ENCODE measurements at regions of chr15 and their contacts with region 1.

Region 1: GRCh38 chr15:55434989-55435825 is 26.9 kb downstream of the PIERCE2 start:
- DNase-seq: peak in 1 of 2 donors; percentile 66
- ATAC-seq: peak in 2 of 3 donors; percentile 67
- H3K4me3 ChIP-seq: no peak overlapping the region
- H3K4me3 Mint-ChIP-seq: no peak overlapping the region
- H3K27ac ChIP-seq: no peak overlapping the region
- H3K27ac Mint-ChIP-seq: no peak overlapping the region
- H3K4me1 ChIP-seq: no peaks in the 10 kb centered on the region
- H3K4me1 Mint-ChIP-seq: peaks cover 4% of the 10 kb centered on the region in 2 donors
- H3K27me3 ChIP-seq: no peaks in the 10 kb centered on the region
- H3K27me3 Mint-ChIP-seq: no peaks in the 10 kb centered on the region
- CTCF ChIP-seq: peak; percentile 52

Region 2: GRCh38 chr15:53962332-53963241 is 1472.6 kb before region 1 on chr15:
- intact Hi-C with region 1: loop called (anchors 10 kb)
- DNase-seq: peak in 1 of 2 donors; percentile 15
- ATAC-seq: no peak
- H3K4me3 ChIP-seq: no peak overlapping the region
- H3K4me3 Mint-ChIP-seq: no peak overlapping the region
- H3K27ac ChIP-seq: no peak overlapping the region
- H3K27ac Mint-ChIP-seq: no peak overlapping the region
- H3K4me1 ChIP-seq: no peaks in the 10 kb centered on the region
- H3K4me1 Mint-ChIP-seq: no peaks in the 10 kb centered on the region
- H3K27me3 ChIP-seq: no peaks in the 10 kb centered on the region
- H3K27me3 Mint-ChIP-seq: no peaks in the 10 kb centered on the region
- CTCF ChIP-seq: no peak

Region 3: GRCh38 chr15:55372701-55373440 is 62.3 kb before region 1 on chr15:
- intact Hi-C with region 1: no loop called
- DNase-seq: no peak
- ATAC-seq: no peak
- H3K4me3 ChIP-seq: no peak overlapping the region
- H3K4me3 Mint-ChIP-seq: no peak overlapping the region
- H3K27ac ChIP-seq: no peak overlapping the region
- H3K27ac Mint-ChIP-seq: peak overlapping the region; percentile 41 to 68
- H3K4me1 ChIP-seq: no peaks in the 10 kb centered on the region
- H3K4me1 Mint-ChIP-seq: peaks cover 6 to 9% of the 10 kb centered on the region in 2 donors
- H3K27me3 ChIP-seq: no peaks in the 10 kb centered on the region
- H3K27me3 Mint-ChIP-seq: no peaks in the 10 kb centered on the region
- CTCF ChIP-seq: no peak

Region 4: GRCh38 chr15:55389276-55389631 is 46.0 kb before region 1 on chr15:
- intact Hi-C with region 1: no loop called
- DNase-seq: no peak
- ATAC-seq: peak in 1 of 3 donors; percentile 46
- H3K4me3 ChIP-seq: no peak overlapping the region
- H3K4me3 Mint-ChIP-seq: no peak overlapping the region
- H3K27ac ChIP-seq: no peak overlapping the region
- H3K27ac Mint-ChIP-seq: peak overlapping the region in 1 of 2 donors; percentile 73
- H3K4me1 ChIP-seq: no peaks in the 10 kb centered on the region
- H3K4me1 Mint-ChIP-seq: peaks cover 6 to 11% of the 10 kb centered on the region in 2 donors
- H3K27me3 ChIP-seq: no peaks in the 10 kb centered on the region
- H3K27me3 Mint-ChIP-seq: no peaks in the 10 kb centered on the region
- CTCF ChIP-seq: no peak

Region 5: GRCh38 chr15:55420171-55420866 is 14.9 kb before region 1 on chr15:
- intact Hi-C with region 1: no loop called
- DNase-seq: no peak
- ATAC-seq: no peak
- H3K4me3 ChIP-seq: no peak overlapping the region
- H3K4me3 Mint-ChIP-seq: no peak overlapping the region
- H3K27ac ChIP-seq: no peak overlapping the region
- H3K27ac Mint-ChIP-seq: no peak overlapping the region
- H3K4me1 ChIP-seq: no peaks in the 10 kb centered on the region
- H3K4me1 Mint-ChIP-seq: no peaks in the 10 kb centered on the region
- H3K27me3 ChIP-seq: no peaks in the 10 kb centered on the region
- H3K27me3 Mint-ChIP-seq: no peaks in the 10 kb centered on the region
- CTCF ChIP-seq: no peak

Region 6: DNA sequence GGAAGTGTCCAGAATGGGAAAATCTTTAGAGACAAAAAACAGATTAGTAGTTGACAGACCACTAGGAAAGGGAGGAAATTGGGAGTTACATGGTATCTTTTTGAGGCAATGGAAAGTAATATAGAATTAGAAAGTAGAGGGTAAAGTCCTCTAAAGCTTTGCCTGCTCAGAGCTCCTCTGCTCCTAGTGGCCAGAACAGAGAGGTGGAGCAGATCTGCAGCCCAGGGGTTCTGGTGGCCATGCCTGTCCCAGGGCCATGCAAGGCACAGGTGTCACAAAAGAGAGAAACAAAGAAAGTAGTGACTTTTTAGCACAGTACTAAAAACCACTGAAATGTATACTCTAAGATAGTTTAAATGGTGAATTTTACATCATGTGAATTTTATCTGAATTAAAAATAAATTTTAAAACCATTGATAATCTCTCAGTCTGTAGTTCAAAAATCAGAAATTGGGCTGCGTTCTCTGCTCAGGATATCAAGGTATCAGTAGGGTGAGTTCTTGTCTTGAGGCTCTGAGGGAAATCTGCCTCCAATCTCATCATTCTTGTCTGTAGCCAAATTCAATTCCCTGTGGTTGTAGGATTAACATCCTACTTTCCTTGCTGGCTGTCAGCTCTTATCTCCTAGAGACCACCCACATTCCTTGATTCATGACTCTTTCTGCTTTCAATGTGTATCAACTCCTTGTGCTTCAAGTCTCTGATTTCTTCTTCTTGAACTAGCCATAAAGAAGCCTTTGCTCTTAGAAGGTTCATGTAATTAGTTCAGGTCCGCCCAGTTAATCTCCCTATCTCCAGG is 129.3 kb after region 1 on chr15:
- intact Hi-C with region 1: no loop called
- DNase-seq: no peak
- ATAC-seq: no peak
- H3K4me3 ChIP-seq: no peak overlapping the region
- H3K4me3 Mint-ChIP-seq: no peak overlapping the region
- H3K27ac ChIP-seq: no peak overlapping the region
- H3K27ac Mint-ChIP-seq: no peak overlapping the region
- H3K4me1 ChIP-seq: no peaks in the 10 kb centered on the region
- H3K4me1 Mint-ChIP-seq: no peaks in the 10 kb centered on the region
- H3K27me3 ChIP-seq: no peaks in the 10 kb centered on the region
- H3K27me3 Mint-ChIP-seq: peaks cover 6 to 8% of the 10 kb centered on the region in 2 donors
- CTCF ChIP-seq: no peak